Gastrocnemius medialis (tissue), 4 donors: ENCODE measurements at regions of chr14 and their contacts with region 1.

Region 1: GRCh38 chr14:99793213-99794150 is at the start of gene EML1:
- DNase-seq: peak; percentile 72 to 75
- ATAC-seq: peak; percentile 93 to 95
- H3K4me3 ChIP-seq: peak within 1 kb of the TSS; percentile 56 to 62 (median 57)
- H3K27ac ChIP-seq: peak within 1 kb of the TSS; percentile 71 to 80 (median 78)
- H3K4me1 ChIP-seq: peaks cover 23 to 26% of the 10 kb centered on the region in 2 donors
- H3K27me3 ChIP-seq: no peaks in the 10 kb centered on the region
- CTCF ChIP-seq: peak in 1 of 5 experiments; percentile 14
- POLR2A ChIP-seq: no peak
- total RNA-seq, gene EML1: 12.5 to 19.1 (median 16.6) TPM

Region 2: DNA sequence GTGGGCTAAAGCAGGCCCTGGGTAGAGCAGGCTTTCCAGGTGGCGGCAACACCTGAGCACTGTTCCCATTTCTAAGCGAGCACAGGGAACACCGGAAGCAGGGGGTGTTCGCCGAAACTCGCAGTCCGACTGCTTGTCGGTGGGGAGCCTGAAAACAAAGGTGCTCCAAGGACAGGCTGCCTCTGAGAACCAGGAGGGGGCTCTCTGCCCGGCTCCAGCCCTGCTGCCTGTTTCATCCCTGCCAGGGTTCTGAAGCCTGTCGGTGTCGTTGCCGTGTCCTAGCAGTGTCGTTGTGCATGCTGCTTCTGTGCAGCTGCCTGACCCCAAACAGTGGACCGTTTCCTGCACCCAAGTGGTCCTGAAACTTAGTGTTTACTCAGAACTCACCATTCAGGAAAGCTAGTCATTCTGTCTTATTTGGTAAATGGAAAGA is 290.5 kb before region 1 on chr14:
- in situ Hi-C with region 1: no loop called
- intact Hi-C with region 1: no loop called
- DNase-seq: no peak
- ATAC-seq: no peak
- H3K4me3 ChIP-seq: no peak overlapping the region
- H3K27ac ChIP-seq: no peak overlapping the region
- H3K4me1 ChIP-seq: no peaks in the 10 kb centered on the region
- H3K27me3 ChIP-seq: no peaks in the 10 kb centered on the region
- CTCF ChIP-seq: no peak
- POLR2A ChIP-seq: no peak

Region 3: GRCh38 chr14:99683619-99684355 is 109.7 kb before region 1 on chr14 and contains the start of gene CYP46A1:
- in situ Hi-C with region 1: no loop called
- intact Hi-C with region 1: loop called (anchors 1 kb)
- DNase-seq: peak; percentile 100
- ATAC-seq: peak; percentile 87 to 94
- H3K4me3 ChIP-seq: peak within 1 kb of the TSS; percentile 82 to 99 (median 90)
- H3K27ac ChIP-seq: peak within 1 kb of the TSS; percentile 75 to 90 (median 88)
- H3K4me1 ChIP-seq: peaks cover 7 to 11% of the 10 kb centered on the region in 2 donors
- H3K27me3 ChIP-seq: no peaks in the 10 kb centered on the region
- CTCF ChIP-seq: peak in 1 of 5 experiments; percentile 18
- POLR2A ChIP-seq: no peak
- total RNA-seq, gene CYP46A1: 0.18 to 2.2 (median 0.45) TPM

Region 4: GRCh38 chr14:99729991-99730868 is 63.3 kb before region 1 on chr14:
- in situ Hi-C with region 1: loop called in 1 of 4 experiments (anchors 10 kb)
- intact Hi-C with region 1: loop called (anchors 2 kb)
- DNase-seq: peak; percentile 2 to 46
- ATAC-seq: peak; percentile 57 to 80
- H3K4me3 ChIP-seq: peak overlapping the region; percentile 33 to 63 (median 42)
- H3K27ac ChIP-seq: no peak overlapping the region
- H3K4me1 ChIP-seq: peaks cover 9 to 22% of the 10 kb centered on the region in 2 donors
- H3K27me3 ChIP-seq: no peaks in the 10 kb centered on the region
- CTCF ChIP-seq: peak; percentile 84 to 96 (median 90)
- POLR2A ChIP-seq: no peak

Region 5: DNA sequence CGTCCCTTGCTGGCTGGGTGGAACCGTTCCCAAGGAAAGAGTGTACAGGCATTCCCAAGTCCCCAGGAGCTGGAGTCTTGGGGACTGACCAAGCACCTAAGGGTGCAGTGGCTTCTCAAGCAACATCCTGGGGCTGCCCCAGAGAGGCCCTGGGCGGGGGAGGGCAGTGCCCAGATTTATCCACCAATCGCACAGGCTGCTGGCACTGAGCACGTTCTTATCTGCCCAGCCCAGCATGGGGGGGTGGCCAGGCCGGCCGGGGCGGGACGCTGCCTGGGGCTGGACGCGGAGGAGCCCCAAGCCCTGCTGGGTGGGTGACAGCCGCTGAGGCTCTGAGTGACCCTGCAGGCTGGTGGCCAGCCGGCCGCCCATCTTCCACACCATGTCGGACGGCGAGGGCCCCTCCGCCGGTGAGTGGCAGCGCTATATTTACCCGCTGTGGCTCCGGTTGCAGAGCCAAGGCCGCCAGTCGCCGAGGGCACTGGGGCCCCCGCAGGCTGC is 56.0 kb before region 1 on chr14:
- in situ Hi-C with region 1: loop called in 1 of 4 experiments (anchors 10 kb)
- intact Hi-C with region 1: loop called (anchors 2 kb)
- DNase-seq: peak in 1 of 2 donors; percentile 54
- ATAC-seq: peak; percentile 57 to 64
- H3K4me3 ChIP-seq: peak overlapping the region; percentile 61 to 69 (median 64)
- H3K27ac ChIP-seq: peak overlapping the region; percentile 77 to 86 (median 84)
- H3K4me1 ChIP-seq: peaks cover 50 to 65% of the 10 kb centered on the region in 2 donors
- H3K27me3 ChIP-seq: no peaks in the 10 kb centered on the region
- CTCF ChIP-seq: no peak
- POLR2A ChIP-seq: peak in 1 of 2 donors; percentile 23

Region 6: GRCh38 chr14:99809360-99809759 is 15.9 kb after region 1 on chr14:
- in situ Hi-C with region 1: no loop called
- intact Hi-C with region 1: loop called (anchors 2 kb)
- DNase-seq: peak; percentile 63 to 80
- ATAC-seq: peak; percentile 81 to 89
- H3K4me3 ChIP-seq: no peak overlapping the region
- H3K27ac ChIP-seq: peak overlapping the region; percentile 58 to 73 (median 70)
- H3K4me1 ChIP-seq: peaks cover 15 to 34% of the 10 kb centered on the region in 2 donors
- H3K27me3 ChIP-seq: no peaks in the 10 kb centered on the region
- CTCF ChIP-seq: no peak
- POLR2A ChIP-seq: no peak

Region 7: GRCh38 chr14:99872786-99873440 is 79.4 kb after region 1 on chr14:
- in situ Hi-C with region 1: no loop called
- intact Hi-C with region 1: no loop called
- DNase-seq: no peak
- ATAC-seq: no peak
- H3K4me3 ChIP-seq: no peak overlapping the region
- H3K27ac ChIP-seq: no peak overlapping the region
- H3K4me1 ChIP-seq: peaks cover 9 to 12% of the 10 kb centered on the region in 2 donors
- H3K27me3 ChIP-seq: no peaks in the 10 kb centered on the region
- CTCF ChIP-seq: no peak
- POLR2A ChIP-seq: no peak

Region 8: GRCh38 chr14:99884834-99885648 is 91.6 kb after region 1 on chr14:
- in situ Hi-C with region 1: no loop called
- intact Hi-C with region 1: loop called (anchors 5 kb)
- DNase-seq: no peak
- ATAC-seq: peak; percentile 81 to 91
- H3K4me3 ChIP-seq: no peak overlapping the region
- H3K27ac ChIP-seq: no peak overlapping the region
- H3K4me1 ChIP-seq: no peaks in the 10 kb centered on the region
- H3K27me3 ChIP-seq: no peaks in the 10 kb centered on the region
- CTCF ChIP-seq: peak; percentile 67 to 81 (median 80)
- POLR2A ChIP-seq: no peak

Region 9: DNA sequence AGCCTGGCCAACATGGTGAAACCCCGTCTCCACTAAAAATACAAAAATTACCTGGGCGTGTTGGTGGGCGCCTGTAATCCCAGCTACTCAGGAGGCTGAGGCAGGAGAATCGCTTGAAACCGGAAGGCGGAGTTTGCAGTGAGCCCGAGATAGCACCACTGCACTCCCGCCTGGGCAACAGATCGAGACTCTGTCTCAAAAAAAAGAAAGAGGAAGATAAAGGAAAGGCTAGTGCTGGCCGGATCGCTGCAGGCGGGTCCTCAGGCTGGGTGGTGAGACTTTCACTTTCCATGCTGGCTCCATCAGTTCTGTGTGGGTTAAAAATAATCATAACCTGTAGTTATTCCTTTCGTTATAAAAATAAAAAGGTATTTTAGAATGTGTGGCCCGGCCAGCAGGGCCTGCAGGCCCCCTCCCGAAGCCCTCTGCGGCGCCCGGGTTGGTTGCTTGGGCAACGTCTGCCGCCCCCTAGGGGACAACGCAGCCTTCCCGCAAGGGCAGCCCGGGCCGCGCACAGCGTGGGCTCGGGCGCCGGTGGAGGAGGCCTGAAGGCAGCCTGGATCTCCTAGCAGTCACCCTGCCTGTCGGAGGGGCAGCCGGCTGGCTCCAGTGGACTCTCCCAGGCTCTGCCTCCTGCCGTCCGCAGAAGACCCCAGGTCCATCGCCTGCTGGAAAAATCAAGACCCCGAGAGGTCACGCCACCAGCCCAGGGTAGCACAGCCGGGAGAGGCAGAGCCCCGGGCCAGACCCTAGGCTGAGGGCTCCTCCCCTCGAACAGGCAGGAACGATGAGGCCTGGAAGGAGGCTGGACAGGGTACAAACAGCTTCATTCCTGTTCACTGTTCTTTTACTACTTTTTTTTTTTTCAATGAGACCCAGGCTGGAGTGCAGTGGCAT is 524.7 kb after region 1 on chr14:
- in situ Hi-C with region 1: no loop called
- intact Hi-C with region 1: no loop called
- DNase-seq: peak in 1 of 2 donors; percentile 63
- ATAC-seq: peak; percentile 73 to 82
- H3K4me3 ChIP-seq: peak overlapping the region; percentile 44 to 60 (median 50)
- H3K27ac ChIP-seq: peak overlapping the region; percentile 17 to 58 (median 40)
- H3K4me1 ChIP-seq: peaks cover 9 to 11% of the 10 kb centered on the region in 2 donors
- H3K27me3 ChIP-seq: no peaks in the 10 kb centered on the region
- CTCF ChIP-seq: peak; percentile 57 to 94 (median 80)
- POLR2A ChIP-seq: no peak